Right ventricle myocardium inferior (tissue), 1 donor: ENCODE measurements at regions of chr16 and their contacts with region 1.

Region 1: DNA sequence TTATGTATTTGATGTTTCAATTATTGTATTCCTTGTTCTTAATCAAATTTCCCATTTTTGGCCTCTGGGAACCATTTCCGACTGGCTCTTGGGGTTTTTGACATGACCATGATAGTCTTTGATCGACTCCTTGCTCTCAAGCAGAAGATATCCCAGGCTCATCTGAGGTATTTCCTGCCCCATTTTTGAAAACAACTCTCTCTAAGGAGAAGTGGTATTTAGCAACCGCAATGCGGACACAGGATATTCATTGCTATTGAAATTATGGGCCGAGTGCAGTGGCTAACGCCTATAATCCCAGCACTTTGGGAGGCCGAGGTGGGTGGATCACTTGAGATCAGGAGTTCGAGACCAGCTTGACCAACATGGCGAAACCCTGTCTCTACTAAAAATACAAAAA is 5.5 kb downstream of the TANGO6 start:
- DNase-seq: no peak
- ATAC-seq: no peak

Region 2: GRCh38 chr16:68535331-68535730 is 313.5 kb before region 1 on chr16:
- intact Hi-C with region 1: no loop called
- DNase-seq: no peak
- ATAC-seq: no peak

Region 3: GRCh38 chr16:69123910-69124309 is 275.1 kb after region 1 on chr16:
- intact Hi-C with region 1: loop called (anchors 5 kb)
- DNase-seq: no peak
- ATAC-seq: no peak